ENCODE measurements at regions of chr15 and their contacts with region 1.

Region 1: DNA sequence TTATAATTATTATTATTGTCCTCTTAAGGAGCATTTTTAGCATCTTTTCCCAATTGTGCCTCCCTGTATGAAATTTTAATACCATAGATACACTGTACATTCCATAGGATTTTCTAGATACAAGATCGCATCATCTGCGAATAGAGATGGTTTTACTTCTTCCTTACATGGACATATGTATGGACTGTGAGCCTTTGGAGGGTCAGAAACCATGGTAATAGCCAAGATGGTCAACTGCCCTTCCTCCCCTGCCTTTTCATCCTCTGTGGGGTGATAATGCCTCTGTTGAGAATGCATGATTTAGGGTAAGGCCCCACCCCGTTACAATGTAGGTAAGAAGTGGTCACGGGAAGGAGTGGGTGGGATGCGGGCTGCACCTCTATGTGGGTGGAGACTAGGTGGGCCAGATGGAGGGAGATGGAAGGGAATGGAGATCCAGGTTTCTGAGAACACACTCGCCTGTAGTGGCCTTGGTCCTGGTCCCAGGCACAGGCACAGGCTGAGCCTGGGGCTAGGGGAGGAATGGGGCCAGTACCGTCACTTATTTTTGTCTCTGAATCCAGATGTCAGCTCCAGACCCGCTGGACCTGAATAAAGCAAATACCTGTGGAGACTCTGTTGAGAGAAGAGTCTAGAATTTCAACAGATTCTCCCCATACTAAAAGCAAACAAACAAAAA is 31.7 kb downstream of the GOLGA6A start:
- DNase-seq: no peak
- H3K4me3 Mint-ChIP-seq: no peak overlapping the region
- H3K27ac Mint-ChIP-seq: peak overlapping the region; percentile 67
- H3K4me1 Mint-ChIP-seq: peaks cover 34% of the 10 kb centered on the region
- H3K27me3 Mint-ChIP-seq: no peaks in the 10 kb centered on the region

Region 2: DNA sequence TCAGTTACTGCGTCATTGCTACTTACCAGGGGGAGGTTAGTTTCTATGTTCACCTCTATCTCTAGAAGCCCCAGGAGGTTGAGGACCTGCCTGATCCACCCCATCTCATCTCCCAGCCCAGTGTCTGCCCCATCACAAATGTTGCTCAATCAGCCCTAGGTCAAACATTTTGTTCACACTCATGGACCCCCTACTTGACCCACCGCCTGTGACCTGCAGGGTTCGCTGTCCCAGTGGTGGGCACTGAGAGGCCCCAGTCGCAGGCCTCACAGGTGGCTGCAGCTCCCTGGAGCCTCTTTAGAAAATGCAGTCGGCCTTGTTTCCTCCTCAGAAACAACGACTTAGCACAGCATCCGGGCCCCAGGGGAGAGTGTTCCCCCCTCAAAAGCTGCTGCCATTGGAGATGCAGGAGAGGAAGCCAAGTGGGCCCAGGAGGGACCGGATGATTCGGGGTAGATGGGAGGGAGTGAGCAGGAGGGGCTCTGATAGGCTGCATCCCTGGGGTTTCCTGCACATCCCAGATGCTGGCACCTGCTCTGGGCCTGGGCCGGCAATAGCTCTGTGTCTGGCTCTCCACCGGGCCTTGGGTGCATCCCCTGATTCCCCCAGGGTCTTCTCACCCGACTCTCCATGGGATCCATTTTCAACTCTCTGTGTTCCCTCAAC is 279.2 kb before region 1 on chr15:
- CTCF ChIA-PET with region 1: no interaction called
- POLR2A ChIA-PET with region 1: no interaction called
- DNase-seq: no peak
- H3K4me3 Mint-ChIP-seq: no peak overlapping the region
- H3K27ac Mint-ChIP-seq: no peak overlapping the region
- H3K4me1 Mint-ChIP-seq: no peaks in the 10 kb centered on the region
- H3K27me3 Mint-ChIP-seq: peaks cover 12% of the 10 kb centered on the region

Region 3: DNA sequence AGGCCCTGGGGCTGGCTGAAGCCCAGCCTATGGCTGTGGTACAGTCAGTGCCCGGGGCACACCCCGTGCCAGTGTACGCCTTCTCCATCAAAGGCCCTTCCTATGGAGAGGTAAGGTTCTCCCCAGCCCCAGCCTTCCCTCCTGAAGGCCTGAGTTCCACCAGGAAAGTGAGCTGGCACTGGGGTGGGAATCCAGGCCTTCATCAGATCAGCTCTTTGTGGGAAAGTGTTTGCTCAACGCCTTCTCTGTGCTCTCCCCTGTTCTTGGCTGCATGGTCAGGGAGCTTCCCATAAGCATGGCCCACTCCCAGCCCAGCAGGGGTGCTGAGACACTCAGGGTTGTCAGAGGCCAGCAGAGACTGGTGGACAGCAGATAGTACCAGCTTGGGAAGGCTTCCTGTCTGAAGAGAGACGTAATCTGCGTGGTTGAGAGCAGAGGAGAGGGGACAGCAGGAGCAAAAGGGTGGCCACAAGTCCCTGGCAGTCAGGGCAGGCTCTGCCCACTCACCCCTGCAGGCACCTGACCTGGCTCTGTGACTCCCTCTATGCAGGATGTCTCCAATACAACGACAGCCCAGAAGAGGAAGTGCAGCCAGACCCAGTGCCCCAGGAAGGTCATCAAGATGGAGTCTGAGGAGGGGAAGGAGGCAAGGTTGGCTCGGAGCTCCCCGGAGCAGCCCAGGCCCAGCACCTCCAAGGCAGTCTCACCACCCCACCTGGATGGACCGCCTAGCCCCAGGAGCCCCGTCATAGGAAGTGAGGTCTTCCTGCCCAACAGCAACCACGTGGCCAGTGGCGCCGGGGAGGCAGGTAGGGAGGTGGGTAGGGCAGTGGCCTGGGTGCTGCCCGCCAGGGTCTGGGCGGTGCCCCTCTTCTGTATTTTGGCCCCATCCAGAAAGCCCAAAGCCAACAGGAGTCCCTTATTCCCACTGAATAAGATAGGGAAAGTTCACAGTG is 17.8 kb before region 1 on chr15:
- CTCF ChIA-PET with region 1: interaction called, 32 read pairs
- POLR2A ChIA-PET with region 1: no interaction called
- DNase-seq: no peak
- H3K4me3 Mint-ChIP-seq: no peak overlapping the region
- H3K27ac Mint-ChIP-seq: peak overlapping the region; percentile 25
- H3K4me1 Mint-ChIP-seq: no peaks in the 10 kb centered on the region
- H3K27me3 Mint-ChIP-seq: no peaks in the 10 kb centered on the region

Region 4: GRCh38 chr15:74040109-74040850 is 10.4 kb before region 1 on chr15:
- CTCF ChIA-PET with region 1: interaction called, 32 read pairs
- POLR2A ChIA-PET with region 1: interaction called, 6 read pairs
- DNase-seq: no peak
- H3K4me3 Mint-ChIP-seq: no peak overlapping the region
- H3K27ac Mint-ChIP-seq: peak overlapping the region; percentile 74
- H3K4me1 Mint-ChIP-seq: no peaks in the 10 kb centered on the region
- H3K27me3 Mint-ChIP-seq: no peaks in the 10 kb centered on the region